ENCODE measurements at regions of chr7 and their contacts with region 1.

Region 1: GRCh38 chr7:25259587-25260243 is 31.4 kb upstream of the NPVF start:
- DNase-seq: peak; percentile 73

Region 2: GRCh38 chr7:25240340-25240739 is 19.4 kb before region 1 on chr7:
- CTCF ChIA-PET with region 1: no interaction called
- POLR2A ChIA-PET with region 1: no interaction called
- DNase-seq: no peak

Region 3: DNA sequence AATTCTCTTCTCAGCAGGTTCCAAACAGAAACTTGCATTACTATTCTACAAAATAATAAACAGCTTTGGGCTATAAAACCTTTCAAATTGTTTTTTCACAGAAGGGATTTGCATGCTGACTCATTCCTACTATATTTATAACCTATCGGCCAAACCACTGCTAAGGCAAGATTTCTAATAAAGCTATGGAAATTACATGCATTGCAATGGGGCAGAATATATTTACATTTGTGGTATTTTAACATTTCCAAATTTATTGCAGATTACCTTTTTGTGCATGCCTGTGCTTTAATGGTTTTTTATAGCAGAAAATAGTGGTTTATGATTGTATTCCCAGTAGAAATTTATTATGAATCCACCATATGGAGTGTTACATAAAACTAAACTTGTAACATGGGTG is 37.6 kb after region 1 on chr7:
- CTCF ChIA-PET with region 1: no interaction called
- POLR2A ChIA-PET with region 1: no interaction called
- DNase-seq: no peak

Region 4: DNA sequence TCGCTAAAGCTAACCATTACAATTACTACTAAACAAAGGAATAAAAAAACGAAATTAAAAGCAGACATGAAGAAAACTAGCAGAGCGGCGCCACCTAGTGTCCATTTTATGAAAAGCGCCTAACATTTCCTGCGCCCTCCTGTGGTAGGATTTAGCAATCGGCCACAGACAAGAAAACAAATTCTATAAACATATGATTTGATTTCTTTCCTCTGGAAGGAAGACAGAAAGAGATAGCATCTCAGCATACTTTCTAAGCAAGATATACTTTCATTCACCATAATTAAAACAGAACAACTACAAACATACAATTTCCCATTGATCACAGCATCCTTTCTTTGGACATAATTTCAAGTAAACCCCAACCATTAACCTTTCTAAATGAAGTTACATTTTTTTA is 306.2 kb after region 1 on chr7:
- CTCF ChIA-PET with region 1: interaction called, 10 read pairs
- POLR2A ChIA-PET with region 1: no interaction called
- DNase-seq: peak; percentile 46

Measured in HEK293T (cell line).